Psoas muscle (tissue), 8 donors: ENCODE measurements at regions of chr5 and their contacts with region 1.

Region 1: DNA sequence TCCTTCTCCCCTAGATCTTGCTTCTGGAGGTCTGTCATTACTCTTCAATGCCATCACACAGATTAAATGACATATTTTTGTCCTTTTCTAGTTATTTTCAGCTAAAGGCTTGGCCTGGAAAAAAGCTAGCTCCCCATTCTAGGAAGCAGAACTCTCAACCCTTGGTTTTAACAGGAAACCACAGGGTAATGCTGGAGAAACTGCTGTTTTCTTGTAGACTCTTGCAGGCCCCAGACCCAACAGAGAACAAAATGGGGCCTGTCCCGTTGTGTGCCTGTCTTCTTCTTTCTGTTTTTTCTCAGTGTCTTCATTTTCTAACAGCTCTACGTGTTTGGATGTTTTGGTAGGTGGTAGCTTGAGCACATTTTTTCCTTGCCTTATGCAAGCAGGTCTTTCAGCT is 21.5 kb downstream of the DCANP1 start:
- DNase-seq: no peak
- ATAC-seq: no peak
- H3K4me3 ChIP-seq: no peak overlapping the region
- H3K27ac ChIP-seq: no peak overlapping the region
- H3K4me1 ChIP-seq: no peaks in the 10 kb centered on the region
- H3K27me3 ChIP-seq: no peaks in the 10 kb centered on the region
- CTCF ChIP-seq: no peak

Region 2: GRCh38 chr5:135399524-135400205 is 26.0 kb before region 1 on chr5:
- intact Hi-C with region 1: loop called in 1 of 2 experiments (anchors 2 kb)
- DNase-seq: peak in 1 of 2 donors; percentile 34
- ATAC-seq: peak in 1 of 4 donors; percentile 1
- H3K4me3 ChIP-seq: peak overlapping the region; percentile 86
- H3K27ac ChIP-seq: peak overlapping the region; percentile 95
- H3K4me1 ChIP-seq: peaks cover 32% of the 10 kb centered on the region
- H3K27me3 ChIP-seq: no peaks in the 10 kb centered on the region
- CTCF ChIP-seq: no peak

Region 3: DNA sequence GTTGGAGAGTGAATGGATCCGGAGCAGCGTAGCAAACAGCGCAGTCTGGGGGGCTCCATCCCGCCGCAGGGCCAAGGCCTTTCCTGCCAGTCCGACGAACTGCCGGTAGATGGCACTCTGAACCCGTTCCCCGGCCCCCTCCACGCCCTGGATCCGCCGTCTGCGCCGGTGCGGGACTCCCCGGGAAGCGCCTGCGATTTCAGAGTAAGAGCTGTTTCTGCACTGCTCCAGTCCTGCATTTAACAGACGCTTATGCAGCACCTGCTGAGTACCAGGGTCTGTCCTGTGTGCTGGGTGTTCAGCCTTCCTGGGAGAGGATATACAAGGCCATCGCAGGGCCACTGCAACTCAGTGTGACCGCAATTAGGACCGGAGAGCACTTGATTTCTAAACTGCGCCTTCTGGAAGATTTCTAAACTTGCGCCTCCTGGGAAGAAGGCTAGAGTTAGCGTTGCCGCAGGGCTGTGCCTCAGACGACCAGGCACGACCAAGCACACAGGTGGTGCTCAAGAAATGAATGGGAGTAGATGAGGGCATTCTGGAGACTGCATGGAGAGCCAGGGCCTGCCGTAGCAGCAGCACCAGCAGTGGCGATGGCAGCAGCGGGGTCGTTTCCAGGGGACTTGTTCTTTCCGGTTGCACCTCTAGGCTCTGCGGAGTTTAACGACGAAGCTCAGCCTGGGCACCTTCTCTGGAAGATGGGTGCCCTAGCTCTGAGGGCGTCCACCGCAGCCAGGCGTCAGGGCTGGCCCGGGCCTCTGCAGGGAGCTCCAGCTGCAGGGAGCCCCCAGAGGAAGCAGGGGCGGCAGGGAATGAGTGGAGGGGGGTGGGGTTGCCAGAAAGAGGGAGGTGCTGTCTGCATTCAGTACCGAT is 40.8 kb after region 1 on chr5:
- intact Hi-C with region 1: no loop called
- DNase-seq: peak; percentile 68 to 87
- ATAC-seq: peak; percentile 92 to 99 (median 94)
- H3K4me3 ChIP-seq: peak overlapping the region; percentile 49
- H3K27ac ChIP-seq: no peak overlapping the region
- H3K4me1 ChIP-seq: no peaks in the 10 kb centered on the region
- H3K27me3 ChIP-seq: peaks cover 0 to 19% (median 0%) of the 10 kb centered on the region in 3 donors
- CTCF ChIP-seq: peak; percentile 86